HepG2 (cell line): ENCODE measurements at regions of chr17 and their contacts with region 1.

Region 1: GRCh38 chr17:43418441-43419374 is 19.9 kb downstream of the ARL4D start:
- DNase-seq: peak; percentile 56
- ATAC-seq: peak; percentile 97
- H3K4me3 ChIP-seq: peak overlapping the region; percentile 32 to 65 (median 32); a peak in 5 of 6 replicates
- H3K27ac ChIP-seq: peak overlapping the region; percentile 4
- H3K4me1 ChIP-seq: peaks cover 34% of the 10 kb centered on the region
- H3K27me3 ChIP-seq: peaks cover 7 to 46% of the 10 kb centered on the region in 2 experiments; a peak in 4 of 5 replicates
- CTCF ChIP-seq: peak; percentile 57
- EP300 ChIP-seq: no peak
- POLR2A ChIP-seq: no peak
- RAD21 ChIP-seq: peak; percentile 32; the same call in 1 of the 2 replicates

Region 2: GRCh38 chr17:43200127-43200526 is 218.6 kb before region 1 on chr17:
- CTCF ChIA-PET with region 1: no interaction called
- POLR2A ChIA-PET with region 1: no interaction called
- in situ Hi-C with region 1: no loop called
- intact Hi-C with region 1: no loop called
- DNase-seq: no peak
- ATAC-seq: peak; percentile 68
- H3K4me3 ChIP-seq: no peak overlapping the region
- H3K27ac ChIP-seq: no peak overlapping the region
- H3K4me1 ChIP-seq: peaks cover 14% of the 10 kb centered on the region; the same call in 1 of the 2 replicates
- H3K27me3 ChIP-seq: no peaks in the 10 kb centered on the region
- CTCF ChIP-seq: peak; percentile 26
- EP300 ChIP-seq: no peak
- POLR2A ChIP-seq: no peak
- RAD21 ChIP-seq: no peak

Region 3: DNA sequence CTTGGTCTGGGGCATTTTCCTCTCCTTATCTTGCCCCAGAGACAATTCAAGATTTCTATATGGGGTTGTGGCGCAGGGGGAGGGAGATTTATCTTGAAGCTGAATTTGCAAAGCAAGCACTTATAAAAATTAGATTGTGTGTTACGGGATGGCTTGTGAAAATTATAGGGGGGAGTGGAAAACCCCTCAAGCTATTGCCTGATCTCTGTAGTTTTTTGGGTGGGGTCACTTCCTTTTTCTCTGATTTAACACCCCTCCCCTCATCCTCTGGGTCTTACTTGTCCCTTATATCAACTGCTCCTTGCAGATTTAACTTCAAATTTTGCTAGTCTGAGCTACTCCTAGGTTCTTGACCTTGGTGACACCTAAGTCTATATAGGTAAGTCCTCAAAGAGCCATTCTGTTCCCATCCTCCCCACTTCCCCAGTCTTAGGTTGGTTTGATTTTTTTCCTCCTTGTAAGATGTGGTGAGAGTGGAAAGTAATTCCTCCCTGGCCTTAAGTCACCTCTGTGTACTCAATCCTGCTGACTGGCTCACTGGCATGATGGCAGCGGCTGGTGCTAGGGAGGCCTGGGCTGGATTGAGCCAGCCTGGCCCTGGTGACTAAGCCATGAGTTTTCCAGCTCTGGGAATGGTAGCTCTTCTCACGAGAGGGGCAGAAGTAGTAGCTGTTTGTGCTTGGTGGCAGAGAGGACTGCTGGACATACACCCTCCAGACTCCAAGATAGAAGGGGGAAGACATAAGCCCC is 17.6 kb before region 1 on chr17:
- CTCF ChIA-PET with region 1: no interaction called
- POLR2A ChIA-PET with region 1: interaction called, 29 read pairs
- in situ Hi-C with region 1: no loop called
- intact Hi-C with region 1: no loop called
- DNase-seq: no peak
- ATAC-seq: no peak
- H3K4me3 ChIP-seq: peak overlapping the region in 2 of 3 experiments; percentile 27 to 77; a peak in 2 of 6 replicates
- H3K27ac ChIP-seq: no peak overlapping the region
- H3K4me1 ChIP-seq: peaks cover 68% of the 10 kb centered on the region
- H3K27me3 ChIP-seq: no peaks in the 10 kb centered on the region; a peak in 1 of 5 replicates
- CTCF ChIP-seq: no peak
- EP300 ChIP-seq: no peak
- POLR2A ChIP-seq: no peak
- RAD21 ChIP-seq: no peak

Region 4: GRCh38 chr17:43443381-43443780 is 24.7 kb after region 1 on chr17:
- CTCF ChIA-PET with region 1: no interaction called
- POLR2A ChIA-PET with region 1: no interaction called
- in situ Hi-C with region 1: no loop called
- intact Hi-C with region 1: no loop called
- DNase-seq: no peak
- ATAC-seq: no peak
- H3K4me3 ChIP-seq: no peak overlapping the region
- H3K27ac ChIP-seq: no peak overlapping the region
- H3K4me1 ChIP-seq: peaks cover 45% of the 10 kb centered on the region
- H3K27me3 ChIP-seq: no peaks in the 10 kb centered on the region
- CTCF ChIP-seq: no peak
- EP300 ChIP-seq: no peak
- POLR2A ChIP-seq: no peak
- RAD21 ChIP-seq: no peak